ENCODE measurements at regions of chr10 and their contacts with region 1.

Region 1: GRCh38 chr10:122565728-122566206 is 5.2 kb downstream of the DMBT1 start:
- DNase-seq: peak; percentile 94
- H3K4me3 ChIP-seq: peak overlapping the region; percentile 32 to 47 (median 36)
- H3K27ac ChIP-seq: peak overlapping the region in 2 of 4 donors; percentile 28 to 39
- H3K4me1 ChIP-seq: peaks cover 4 to 9% (median 9%) of the 10 kb centered on the region in 4 donors
- H3K27me3 ChIP-seq: peaks cover 0 to 23% (median 0%) of the 10 kb centered on the region in 4 donors
- CTCF ChIP-seq: peak; percentile 82 to 88 (median 85)
- EP300 ChIP-seq: no peak
- POLR2A ChIP-seq: no peak

Region 2: DNA sequence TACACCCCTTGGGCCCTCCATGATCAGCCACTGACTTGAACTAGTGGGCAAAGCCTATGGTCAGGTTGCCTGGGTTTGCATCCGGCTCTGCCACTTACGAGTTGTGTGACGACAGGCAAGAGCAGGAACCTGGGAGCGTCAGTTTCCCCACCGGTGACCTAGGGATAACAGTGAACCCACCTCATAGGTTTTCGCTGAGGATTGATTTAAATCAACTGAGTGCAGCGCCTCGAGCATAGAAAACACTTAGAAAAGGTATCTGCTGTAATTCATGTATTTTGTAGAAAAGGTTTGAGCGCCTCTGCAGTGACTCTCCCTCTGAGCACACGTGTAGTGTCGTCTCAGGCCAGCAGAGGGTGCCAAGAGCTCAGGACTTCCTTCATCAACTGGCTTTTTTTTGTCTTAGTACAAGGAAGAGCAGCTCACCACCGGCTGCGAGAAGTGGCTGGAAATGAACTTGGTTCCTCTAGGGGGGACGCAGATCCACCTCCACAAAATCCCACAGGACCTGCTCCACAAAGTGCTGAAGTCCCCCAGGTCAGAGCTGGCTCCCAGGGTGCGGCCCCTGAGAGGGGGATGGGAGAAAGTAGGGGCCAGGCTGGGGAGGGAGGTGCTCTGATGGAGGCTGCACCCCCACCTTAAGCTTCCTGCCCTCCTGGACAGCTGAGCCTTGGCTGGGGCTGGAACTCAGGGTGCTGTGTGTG is 267.0 kb before region 1 on chr10:
- intact Hi-C with region 1: loop called (anchors 2 kb)
- DNase-seq: peak; percentile 90
- H3K4me3 ChIP-seq: peak overlapping the region in 3 of 4 donors; percentile 19 to 48 (median 19)
- H3K27ac ChIP-seq: peak overlapping the region in 1 of 4 donors; percentile 34
- H3K4me1 ChIP-seq: peaks cover 0 to 27% (median 26%) of the 10 kb centered on the region in 4 donors
- H3K27me3 ChIP-seq: no peaks in the 10 kb centered on the region
- CTCF ChIP-seq: peak; percentile 93 to 96 (median 96)
- EP300 ChIP-seq: no peak
- POLR2A ChIP-seq: no peak

Region 3: DNA sequence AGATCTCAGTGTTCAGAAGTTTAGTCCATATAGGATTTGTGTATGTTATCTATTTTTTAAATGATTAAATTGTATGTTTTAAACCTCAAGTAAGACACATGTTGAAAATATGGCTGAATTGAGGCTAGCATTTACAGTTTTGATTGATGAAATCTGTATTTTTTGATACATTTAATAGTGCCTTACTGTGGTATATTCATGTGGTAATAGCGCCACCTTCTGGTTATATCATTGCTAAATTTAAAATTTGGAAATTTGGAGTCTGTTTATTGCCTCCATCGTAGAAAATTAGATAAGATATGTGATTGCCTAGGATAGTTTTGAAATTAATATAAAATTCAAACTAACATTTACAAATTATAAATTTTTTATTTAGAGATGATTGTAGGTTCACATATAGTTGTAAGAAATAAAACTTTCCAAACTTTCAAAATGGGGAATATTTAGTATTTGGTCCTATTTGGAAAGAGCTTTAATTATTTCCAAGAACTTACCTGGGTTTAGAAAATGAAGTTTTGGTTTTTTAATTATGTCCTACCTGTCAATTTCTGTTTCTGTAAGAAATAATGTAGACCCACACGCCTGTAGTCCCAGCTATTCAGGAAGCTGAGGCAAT is 130.4 kb before region 1 on chr10:
- intact Hi-C with region 1: loop called (anchors 5 kb)
- DNase-seq: no peak
- H3K4me3 ChIP-seq: no peak overlapping the region
- H3K27ac ChIP-seq: no peak overlapping the region
- H3K4me1 ChIP-seq: no peaks in the 10 kb centered on the region
- H3K27me3 ChIP-seq: no peaks in the 10 kb centered on the region
- CTCF ChIP-seq: peak; percentile 61 to 70 (median 70)
- EP300 ChIP-seq: no peak
- POLR2A ChIP-seq: no peak

Region 4: GRCh38 chr10:122703439-122704118 is 137.8 kb after region 1 on chr10:
- intact Hi-C with region 1: loop called (anchors 10 kb)
- DNase-seq: no peak
- H3K4me3 ChIP-seq: no peak overlapping the region
- H3K27ac ChIP-seq: no peak overlapping the region
- H3K4me1 ChIP-seq: no peaks in the 10 kb centered on the region
- H3K27me3 ChIP-seq: peaks cover 0 to 10% (median 0%) of the 10 kb centered on the region in 4 donors
- CTCF ChIP-seq: peak; percentile 66 to 80 (median 69)
- EP300 ChIP-seq: no peak
- POLR2A ChIP-seq: no peak